Activated T-helper 2 cell treated with anti-CD3 and anti-CD28 coated beads, Interferon-gamma antibody, Interleukin-2, Interleukin-4, amounts not matched to agents 10 μg/mL and 5 μg/mL and 100 μg/mL, durations not matched to agents 14 hours and 24 hours and 36 hours (primary cell): ENCODE measurements at regions of chr5 and their contacts with region 1.

Region 1: DNA sequence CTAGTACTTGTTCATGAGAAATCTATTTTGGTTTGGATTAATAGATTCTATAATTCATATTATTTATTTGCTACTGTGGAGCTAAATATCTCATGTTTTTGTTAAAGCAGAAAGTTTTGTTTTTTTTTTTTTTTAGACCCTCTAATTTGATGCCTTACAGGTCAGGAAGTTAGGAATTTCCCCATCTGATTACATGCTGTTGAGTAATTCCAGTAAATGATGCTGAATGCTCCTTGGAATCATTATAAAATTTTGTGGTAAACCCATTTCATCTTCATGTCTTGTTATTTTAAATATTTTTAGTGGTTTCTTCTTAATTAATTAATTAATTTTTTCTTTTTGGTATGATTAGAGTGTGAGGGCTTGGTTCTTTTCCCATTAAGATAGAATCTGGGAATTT is 35.6 kb downstream of the NNT start:
- DNase-seq: no peak
- H3K4me3 Mint-ChIP-seq: no peak overlapping the region
- H3K27ac Mint-ChIP-seq: no peak overlapping the region
- H3K4me1 Mint-ChIP-seq: peaks cover 5% of the 10 kb centered on the region
- H3K27me3 Mint-ChIP-seq: no peaks in the 10 kb centered on the region

Region 2: DNA sequence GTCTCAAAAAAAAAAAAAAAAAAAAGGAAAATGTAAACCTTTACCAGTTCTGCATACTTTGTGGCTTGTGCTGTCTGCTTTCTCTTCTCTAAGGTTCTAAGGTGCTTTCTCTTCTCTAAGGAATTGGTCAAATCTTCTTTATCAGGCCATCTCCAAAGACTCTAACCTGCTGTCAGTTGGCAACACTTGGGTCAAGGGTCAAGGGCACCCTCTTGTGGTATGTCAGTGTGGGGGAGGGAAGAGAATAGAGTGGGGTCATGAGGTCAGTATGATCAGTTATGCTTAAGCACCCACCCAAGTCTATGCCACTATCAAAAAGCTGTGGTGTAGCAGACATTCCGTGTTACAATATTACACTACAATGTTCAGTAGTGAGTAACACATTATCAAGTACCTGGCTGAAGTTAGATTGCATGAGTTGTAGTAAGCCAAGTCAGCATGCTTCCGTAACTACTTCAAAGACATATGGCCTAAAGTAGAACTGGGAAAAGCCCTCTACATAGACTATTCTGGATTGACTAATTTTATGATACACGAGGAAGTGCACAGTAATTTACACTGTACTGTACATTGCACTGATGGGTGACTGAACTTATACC is 201.4 kb before region 1 on chr5:
- intact Hi-C with region 1: no loop called
- DNase-seq: no peak
- H3K4me3 Mint-ChIP-seq: no peak overlapping the region
- H3K27ac Mint-ChIP-seq: no peak overlapping the region
- H3K4me1 Mint-ChIP-seq: no peaks in the 10 kb centered on the region
- H3K27me3 Mint-ChIP-seq: no peaks in the 10 kb centered on the region

Region 3: DNA sequence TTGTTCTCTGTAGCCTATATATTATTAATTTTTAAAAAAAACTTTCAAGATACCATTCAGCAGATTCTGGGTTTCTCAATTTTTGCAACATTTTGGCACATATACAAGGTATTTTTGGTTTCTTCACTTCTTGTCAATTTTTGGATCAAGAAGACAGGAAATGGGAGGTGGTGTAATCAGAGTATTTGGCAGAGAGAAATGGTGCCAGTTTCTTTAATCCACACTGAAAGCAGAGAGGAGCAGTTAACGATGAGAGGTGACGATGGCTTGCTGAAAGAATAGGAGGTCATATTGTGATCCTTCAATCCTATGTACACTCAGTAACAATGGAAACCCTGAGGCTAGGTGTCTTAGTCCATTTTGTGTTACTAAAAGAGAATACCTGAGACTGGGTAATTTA is 19.2 kb before region 1 on chr5:
- intact Hi-C with region 1: no loop called
- DNase-seq: no peak
- H3K4me3 Mint-ChIP-seq: no peak overlapping the region
- H3K27ac Mint-ChIP-seq: no peak overlapping the region
- H3K4me1 Mint-ChIP-seq: peaks cover 7% of the 10 kb centered on the region
- H3K27me3 Mint-ChIP-seq: no peaks in the 10 kb centered on the region

Region 4: DNA sequence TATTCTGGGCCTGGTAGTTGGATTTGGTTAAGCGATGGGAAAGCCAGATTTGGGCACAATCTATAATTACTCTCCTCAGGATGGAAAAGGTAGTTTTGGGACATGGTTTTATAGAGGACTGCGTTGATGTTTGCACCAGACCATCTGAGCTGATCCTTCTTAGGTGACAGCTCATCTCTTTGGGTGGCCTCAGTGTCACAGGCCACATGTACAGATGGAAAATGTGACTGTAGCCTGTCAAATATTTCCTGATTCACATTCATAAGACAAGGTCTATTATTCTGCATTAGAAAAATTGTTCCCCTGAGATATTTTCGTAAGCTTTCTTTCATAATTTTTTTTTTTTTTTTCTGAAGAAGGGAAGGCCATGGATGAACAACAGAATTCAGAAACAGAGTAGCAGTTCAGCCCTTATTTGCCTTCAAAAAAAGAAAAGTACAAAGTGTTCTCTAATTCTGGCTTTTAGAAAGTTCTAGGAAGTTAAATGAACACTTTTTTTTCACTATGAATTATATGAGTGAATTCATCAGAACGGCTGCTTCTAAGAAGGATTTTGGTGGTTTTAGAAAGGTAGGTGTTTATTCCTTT is 45.4 kb after region 1 on chr5:
- intact Hi-C with region 1: loop called (anchors 1 kb)
- DNase-seq: no peak
- H3K4me3 Mint-ChIP-seq: no peak overlapping the region
- H3K27ac Mint-ChIP-seq: peak overlapping the region; percentile 44
- H3K4me1 Mint-ChIP-seq: peaks cover 4% of the 10 kb centered on the region
- H3K27me3 Mint-ChIP-seq: no peaks in the 10 kb centered on the region

Region 5: DNA sequence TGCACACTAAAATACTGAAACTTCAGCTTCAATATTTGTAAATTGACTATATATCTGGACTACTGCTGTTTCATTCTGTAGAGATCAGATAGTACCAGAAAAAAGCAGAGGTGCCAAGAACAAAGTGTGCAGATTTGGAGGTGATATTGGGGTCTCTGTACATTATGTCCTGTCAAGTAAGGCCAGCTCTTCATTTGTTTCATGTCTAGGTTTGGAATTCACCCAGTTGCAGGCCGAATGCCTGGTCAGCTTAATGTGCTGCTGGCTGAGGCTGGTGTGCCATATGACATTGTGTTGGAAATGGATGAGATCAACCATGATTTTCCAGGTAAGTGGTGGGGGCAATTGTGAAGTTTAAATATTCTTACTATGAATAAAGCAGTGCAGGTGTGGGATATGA is 61.4 kb after region 1 on chr5:
- intact Hi-C with region 1: no loop called
- DNase-seq: no peak
- H3K4me3 Mint-ChIP-seq: no peak overlapping the region
- H3K27ac Mint-ChIP-seq: no peak overlapping the region
- H3K4me1 Mint-ChIP-seq: no peaks in the 10 kb centered on the region
- H3K27me3 Mint-ChIP-seq: no peaks in the 10 kb centered on the region